ENCODE measurements at regions of chr18 and their contacts with region 1.

Region 1: GRCh38 chr18:34600118-34600517 is 110.0 kb upstream of the DTNA start:
- DNase-seq: no peak
- ATAC-seq: no peak
- H3K4me3 Mint-ChIP-seq: no peak overlapping the region
- H3K27ac Mint-ChIP-seq: no peak overlapping the region
- H3K4me1 Mint-ChIP-seq: no peaks in the 10 kb centered on the region
- H3K27me3 Mint-ChIP-seq: no peaks in the 10 kb centered on the region

Region 2: GRCh38 chr18:34108206-34108605 is 491.9 kb before region 1 on chr18:
- CTCF ChIA-PET with region 1: no interaction called
- POLR2A ChIA-PET with region 1: no interaction called
- intact Hi-C with region 1: loop called in 1 of 2 experiments (anchors 10 kb)
- DNase-seq: no peak
- ATAC-seq: no peak
- H3K4me3 Mint-ChIP-seq: no peak overlapping the region
- H3K27ac Mint-ChIP-seq: no peak overlapping the region
- H3K4me1 Mint-ChIP-seq: no peaks in the 10 kb centered on the region
- H3K27me3 Mint-ChIP-seq: no peaks in the 10 kb centered on the region

Region 3: DNA sequence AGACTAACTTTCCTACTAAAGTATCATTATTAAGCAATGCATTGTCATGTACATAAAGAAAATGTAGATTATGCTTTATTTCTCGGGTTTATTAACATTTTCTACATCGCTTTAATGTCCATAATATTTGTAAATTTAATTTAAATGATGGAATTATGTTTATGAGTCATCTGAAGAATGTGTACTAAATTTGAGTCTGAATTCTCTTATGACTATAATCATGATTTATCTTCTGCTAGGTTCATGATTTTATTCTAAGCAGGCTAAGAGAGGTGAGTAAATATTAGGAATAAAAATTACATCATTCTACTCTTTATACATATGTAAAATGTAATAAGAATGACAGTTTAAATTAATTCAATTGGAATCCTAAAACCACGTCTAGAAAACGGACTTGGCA is 169.1 kb before region 1 on chr18:
- CTCF ChIA-PET with region 1: no interaction called
- POLR2A ChIA-PET with region 1: no interaction called
- intact Hi-C with region 1: loop called in 1 of 2 experiments (anchors 10 kb)
- DNase-seq: no peak
- ATAC-seq: no peak
- H3K4me3 Mint-ChIP-seq: no peak overlapping the region
- H3K27ac Mint-ChIP-seq: no peak overlapping the region
- H3K4me1 Mint-ChIP-seq: no peaks in the 10 kb centered on the region
- H3K27me3 Mint-ChIP-seq: no peaks in the 10 kb centered on the region

Measured in activated CD4-positive, alpha-beta T cell treated with anti-CD3 and anti-CD28 coated beads for 36 hours (primary cell).